Left cardiac atrium (tissue), 4 donors: ENCODE measurements at regions of chr17 and their contacts with region 1.

Region 1: GRCh38 chr17:1331708-1332107 is 52.2 kb downstream of the TRARG1 start:
- DNase-seq: no peak
- ATAC-seq: peak; percentile 71 to 91

Region 2: GRCh38 chr17:1122533-1123392 is 208.9 kb before region 1 on chr17:
- intact Hi-C with region 1: loop called in 1 of 2 experiments (anchors 10 kb)
- DNase-seq: peak; percentile 86
- ATAC-seq: peak; percentile 81 to 89

Region 3: DNA sequence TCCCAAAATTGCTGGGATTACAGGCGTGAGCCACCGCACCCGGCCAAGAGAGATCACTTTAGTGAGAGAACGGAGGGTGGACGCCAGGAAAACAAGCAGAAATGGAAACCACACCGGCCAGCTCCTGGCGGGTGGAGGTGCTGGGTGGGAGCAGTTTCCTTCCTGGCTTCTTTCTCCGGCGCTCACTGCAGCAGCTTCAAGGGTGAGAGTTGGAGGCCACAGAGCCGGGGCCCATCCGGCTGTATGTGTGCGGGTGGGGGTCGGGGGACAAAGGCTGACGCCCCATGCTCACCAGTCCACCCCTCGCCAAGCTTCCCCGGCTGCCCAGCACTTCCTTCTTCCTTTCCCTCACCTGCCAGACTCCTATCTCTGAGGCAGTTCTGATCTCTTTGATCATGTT is 75.0 kb before region 1 on chr17:
- intact Hi-C with region 1: loop called in 1 of 2 experiments (anchors 5 kb)
- DNase-seq: no peak
- ATAC-seq: no peak

Region 4: DNA sequence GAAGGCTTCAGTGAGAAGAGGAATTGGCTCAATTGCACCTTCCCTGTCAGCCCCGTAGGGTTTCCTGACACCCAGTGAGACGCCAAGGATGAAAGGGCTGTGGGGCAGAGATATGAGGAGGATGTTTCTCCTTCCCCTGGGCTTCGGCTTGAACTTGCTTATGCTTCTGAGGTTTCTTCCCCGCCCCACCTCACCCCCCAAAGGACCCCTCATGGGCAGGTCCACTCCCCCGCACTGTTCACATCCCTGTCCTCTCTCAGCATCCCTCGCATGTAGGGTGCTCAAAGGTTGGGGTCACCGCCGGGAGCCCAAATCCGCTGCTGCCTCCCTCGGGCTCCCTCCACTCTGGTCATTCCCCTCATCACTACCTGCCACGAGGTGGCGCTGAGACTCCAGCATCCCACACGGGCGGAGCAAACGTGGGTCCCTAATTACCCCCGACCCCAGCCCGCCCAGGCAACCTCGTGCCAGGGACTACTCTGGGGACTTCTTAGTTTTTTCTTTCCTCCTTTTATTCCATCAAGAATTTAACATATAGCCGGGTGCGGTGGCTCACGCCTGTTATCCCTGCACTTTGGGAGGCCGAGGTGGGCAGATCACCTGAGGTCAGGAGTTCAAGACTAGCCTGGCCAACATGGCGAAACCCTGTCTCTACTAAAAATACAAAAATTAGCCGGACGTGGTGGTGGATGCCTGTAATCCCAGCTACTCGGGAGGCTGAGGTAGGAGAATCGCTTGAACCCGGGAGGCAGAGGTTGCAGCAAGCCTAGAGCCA is 55.6 kb before region 1 on chr17:
- intact Hi-C with region 1: loop called (anchors 2 to 5 kb)
- DNase-seq: peak; percentile 75
- ATAC-seq: peak; percentile 59 to 78

Region 5: GRCh38 chr17:1455797-1456599 is 124.3 kb after region 1 on chr17 and contains the start of gene CRK:
- intact Hi-C with region 1: no loop called
- DNase-seq: peak; percentile 97
- ATAC-seq: peak; percentile 94 to 97
- total RNA-seq, gene CRK: 37.0 to 44.4 TPM